Prostate gland (tissue), 2 donors: ENCODE measurements at regions of chr7 and their contacts with region 1.

Region 1: GRCh38 chr7:20778063-20778721 is 8.5 kb downstream of the SP8 start:
- DNase-seq: peak; percentile 63
- H3K4me3 ChIP-seq: peak overlapping the region; percentile 36 to 44
- H3K27ac ChIP-seq: peak overlapping the region; percentile 83 to 86
- H3K4me1 ChIP-seq: no peaks in the 10 kb centered on the region
- H3K27me3 ChIP-seq: no peaks in the 10 kb centered on the region
- CTCF ChIP-seq: peak; percentile 62 to 91 (median 78)
- POLR2A ChIP-seq: no peak

Region 2: GRCh38 chr7:22082886-22083703 is 1304.9 kb after region 1 on chr7:
- intact Hi-C with region 1: loop called (anchors 5 kb)
- DNase-seq: peak; percentile 86
- H3K4me3 ChIP-seq: peak overlapping the region; percentile 41 to 50
- H3K27ac ChIP-seq: peak overlapping the region; percentile 88 to 93
- H3K4me1 ChIP-seq: no peaks in the 10 kb centered on the region
- H3K27me3 ChIP-seq: no peaks in the 10 kb centered on the region
- CTCF ChIP-seq: peak; percentile 79 to 96 (median 90)
- POLR2A ChIP-seq: no peak